ENCODE measurements at regions of chr1 and their contacts with region 1.

Region 1: DNA sequence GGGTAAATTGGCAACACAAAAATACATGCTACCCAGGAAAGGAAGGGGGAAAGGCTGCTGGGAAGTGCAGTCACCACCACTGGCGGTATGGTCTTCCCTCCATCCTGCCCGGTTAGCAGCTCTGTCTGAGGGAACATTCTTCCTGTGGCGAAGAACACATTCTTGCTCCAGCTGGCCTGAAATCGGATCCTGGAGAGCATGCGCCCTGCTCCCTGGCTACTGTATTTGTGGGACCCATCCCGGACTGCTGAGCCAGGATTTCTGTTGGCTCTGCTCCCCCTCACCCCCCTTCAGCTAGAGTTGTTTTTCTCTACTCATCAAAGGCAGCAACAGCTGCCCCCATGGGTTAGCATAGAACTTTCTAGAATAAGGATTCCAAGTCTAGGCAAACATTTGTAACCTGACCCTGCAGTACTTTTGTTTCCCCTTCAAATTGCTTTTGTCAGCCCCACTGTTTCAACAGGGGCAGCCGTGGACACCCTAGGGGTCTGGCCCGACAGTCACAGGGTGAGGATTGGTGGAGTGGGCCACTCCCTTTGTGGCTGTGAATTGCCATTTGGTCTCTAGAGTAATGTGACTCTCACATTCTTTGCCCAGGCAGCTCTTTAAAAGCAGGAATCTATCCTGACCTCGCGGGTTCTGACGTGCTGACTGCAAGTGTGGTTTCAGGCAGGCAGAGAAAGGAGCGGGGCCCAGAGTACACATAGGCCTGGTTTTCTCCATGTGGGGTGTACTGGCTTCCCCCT is 157.7 kb downstream of the TOMM20 start:
- DNase-seq: peak; percentile 64 to 84
- H3K4me3 ChIP-seq: peak overlapping the region in 2 of 3 donors; percentile 44 to 63
- H3K27ac ChIP-seq: peak overlapping the region; percentile 88 to 89
- H3K4me1 ChIP-seq: peaks cover 5 to 25% of the 10 kb centered on the region in 2 donors
- H3K27me3 ChIP-seq: no peaks in the 10 kb centered on the region
- CTCF ChIP-seq: no peak
- POLR2A ChIP-seq: no peak

Region 2: DNA sequence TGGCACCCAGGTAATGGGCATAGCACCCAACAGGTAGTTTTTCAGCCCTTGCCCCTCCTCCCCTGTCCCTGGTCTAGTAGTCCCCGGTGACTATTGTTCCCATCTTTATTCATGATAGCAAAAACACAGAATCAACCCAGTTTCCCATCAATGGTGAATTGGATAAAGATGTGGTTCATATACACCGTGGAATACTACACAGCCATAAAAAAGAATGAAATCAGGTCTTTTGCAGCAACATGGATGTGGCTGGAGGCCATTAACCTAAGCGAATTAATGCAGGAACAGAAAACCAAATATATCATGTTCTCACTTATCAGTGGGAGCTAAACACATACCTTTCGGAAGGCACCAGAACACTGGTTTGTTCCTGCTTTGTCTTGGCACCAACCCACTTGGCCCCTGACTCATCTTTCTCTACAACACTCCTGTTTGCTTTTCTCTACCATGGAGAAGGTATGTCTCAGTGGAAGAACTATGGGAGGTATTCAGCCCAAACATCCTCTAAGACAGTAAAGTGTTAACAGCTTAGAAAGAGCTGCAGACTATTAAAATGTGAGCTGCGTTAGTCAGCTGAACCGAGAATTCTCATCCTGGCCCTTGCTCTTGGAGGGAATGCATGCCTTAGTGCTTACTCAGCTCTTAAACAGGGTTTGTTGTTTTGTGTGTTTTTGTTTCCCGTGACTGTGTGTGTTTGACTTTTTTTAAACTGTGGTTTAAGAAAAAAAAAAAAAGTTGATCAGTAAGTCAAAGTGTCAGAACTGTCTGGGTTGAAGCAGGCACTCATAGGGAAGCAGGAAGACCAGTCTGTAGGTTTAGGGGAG is 45.3 kb before region 1 on chr1:
- intact Hi-C with region 1: loop called (anchors 2 kb)
- DNase-seq: peak in 1 of 2 donors; percentile 19
- H3K4me3 ChIP-seq: no peak overlapping the region
- H3K27ac ChIP-seq: peak overlapping the region; percentile 64 to 77
- H3K4me1 ChIP-seq: peaks cover 0 to 12% of the 10 kb centered on the region in 2 donors
- H3K27me3 ChIP-seq: no peaks in the 10 kb centered on the region
- CTCF ChIP-seq: no peak
- POLR2A ChIP-seq: no peak